Natural killer cell (primary cell): ENCODE measurements at regions of chr11 and their contacts with region 1.

Region 1: DNA sequence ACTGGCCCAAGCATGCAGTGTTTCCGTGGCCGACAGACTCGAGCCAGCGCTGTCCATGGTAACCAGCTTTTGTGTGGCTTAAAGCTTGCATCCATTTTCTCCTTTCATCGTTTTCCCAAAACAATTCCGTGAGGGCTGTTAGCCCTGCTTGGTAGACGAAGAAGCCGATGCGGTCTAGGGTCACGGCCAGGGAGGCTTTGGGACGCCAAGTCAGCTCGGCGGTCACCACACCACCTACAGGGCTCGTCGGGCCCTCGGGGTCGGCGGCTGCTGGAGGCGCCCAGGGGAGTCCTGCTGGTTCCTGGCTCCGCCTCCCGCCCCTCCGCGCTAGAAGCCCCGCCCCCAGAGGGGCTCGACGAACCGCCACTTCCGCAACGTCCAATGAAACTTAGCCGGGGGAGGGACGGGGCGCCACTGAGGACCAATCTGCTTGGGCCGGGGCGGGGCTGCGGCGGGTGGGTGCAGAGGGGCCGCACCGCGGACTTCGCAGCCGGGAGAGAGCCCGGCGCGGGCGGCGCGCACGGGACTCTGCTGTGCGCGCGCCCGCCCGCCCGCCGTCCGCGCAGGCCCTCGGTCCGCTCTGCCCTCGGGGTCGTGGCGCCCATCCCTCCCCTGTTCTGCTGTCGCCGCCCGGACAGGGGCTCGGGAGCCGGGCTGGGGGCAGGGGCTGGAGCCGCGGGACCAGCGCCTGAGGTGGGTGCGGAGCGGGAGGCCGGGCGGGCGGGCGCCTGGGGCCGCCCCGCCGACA is at the start of gene TIGD3:
- DNase-seq: peak; percentile 96 to 97
- ATAC-seq: peak; percentile 96 to 99 (median 97)
- H3K4me3 ChIP-seq: peak within 1 kb of the TSS; percentile 49
- H3K4me3 Mint-ChIP-seq: peak within 1 kb of the TSS; percentile 92
- H3K27ac ChIP-seq: peak within 1 kb of the TSS; percentile 44
- H3K27ac Mint-ChIP-seq: peak within 1 kb of the TSS; percentile 79 to 94
- H3K4me1 ChIP-seq: peaks cover 19% of the 10 kb centered on the region
- H3K4me1 Mint-ChIP-seq: peaks cover 15 to 20% of the 10 kb centered on the region in 2 donors
- H3K27me3 ChIP-seq: no peaks in the 10 kb centered on the region
- H3K27me3 Mint-ChIP-seq: no peaks in the 10 kb centered on the region
- CTCF ChIP-seq: no peak
- total RNA-seq, gene TIGD3: 0.70 to 2.2 (median 1.2) TPM

Region 2: DNA sequence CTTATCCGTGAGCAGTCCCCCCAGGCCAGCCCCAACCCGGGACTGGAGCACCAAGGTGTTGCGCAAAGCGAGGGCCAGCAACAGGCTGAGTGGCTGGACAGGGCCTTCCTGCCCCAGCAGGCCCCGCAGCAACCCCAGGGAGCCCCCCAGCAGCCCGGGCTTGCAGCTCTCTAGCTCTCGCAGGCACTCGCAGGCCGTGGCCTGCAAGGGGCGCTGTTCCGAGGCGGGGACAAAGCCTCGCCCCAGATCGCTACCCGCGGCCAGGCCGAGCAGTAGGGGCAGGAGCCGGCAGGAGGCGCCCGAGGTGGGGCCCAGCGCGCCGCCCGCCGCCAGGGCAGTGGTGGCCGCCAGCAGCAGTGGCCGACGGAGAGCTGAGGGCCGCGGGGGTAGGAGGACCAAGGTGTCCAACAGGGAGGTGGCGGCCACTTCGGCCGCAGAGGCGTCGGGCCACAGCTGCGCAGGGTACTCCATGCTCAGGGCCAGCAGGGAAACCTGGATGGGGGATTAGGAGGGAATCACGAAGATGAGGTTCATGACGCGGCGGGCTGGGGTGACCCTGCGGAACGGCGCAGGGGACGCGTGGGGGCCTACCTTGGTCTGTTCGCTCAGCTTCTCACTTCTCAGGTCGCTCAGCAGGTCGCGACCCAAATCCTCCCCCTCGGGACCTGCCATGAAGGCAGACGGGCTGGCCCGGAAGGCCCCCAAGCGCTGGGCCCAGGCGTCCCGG is 425.6 kb after region 1 on chr11:
- intact Hi-C with region 1: loop called (anchors 10 kb)
- DNase-seq: peak; percentile 73 to 86
- ATAC-seq: peak; percentile 61 to 89 (median 76)
- H3K4me3 ChIP-seq: peak overlapping the region; percentile 84
- H3K4me3 Mint-ChIP-seq: peak overlapping the region; percentile 86
- H3K27ac ChIP-seq: peak overlapping the region; percentile 50
- H3K27ac Mint-ChIP-seq: peak overlapping the region; percentile 45 to 90
- H3K4me1 ChIP-seq: peaks cover 27% of the 10 kb centered on the region
- H3K4me1 Mint-ChIP-seq: peaks cover 6 to 17% of the 10 kb centered on the region in 2 donors
- H3K27me3 ChIP-seq: no peaks in the 10 kb centered on the region
- H3K27me3 Mint-ChIP-seq: peaks cover under 1 to 7% of the 10 kb centered on the region in 2 donors
- CTCF ChIP-seq: peak; percentile 91